ENCODE measurements at regions of chr22 and their contacts with region 1.

Region 1: GRCh38 chr22:35921777-35922176 is 106.8 kb downstream of the RBFOX2 start:
- DNase-seq: peak in 4 of 5 donors; percentile 69 to 78 (median 71)
- ATAC-seq: peak; percentile 76 to 92 (median 89)
- H3K4me3 ChIP-seq: no peak overlapping the region
- H3K27ac ChIP-seq: peak overlapping the region in 7 of 12 donors; percentile 9 to 70 (median 26)
- H3K4me1 ChIP-seq: peaks cover 0 to 67% (median 43%) of the 10 kb centered on the region in 12 donors
- H3K27me3 ChIP-seq: no peaks in the 10 kb centered on the region
- CTCF ChIP-seq: peak; percentile 50 to 87 (median 76)
- POLR2A ChIP-seq: no peak

Region 2: DNA sequence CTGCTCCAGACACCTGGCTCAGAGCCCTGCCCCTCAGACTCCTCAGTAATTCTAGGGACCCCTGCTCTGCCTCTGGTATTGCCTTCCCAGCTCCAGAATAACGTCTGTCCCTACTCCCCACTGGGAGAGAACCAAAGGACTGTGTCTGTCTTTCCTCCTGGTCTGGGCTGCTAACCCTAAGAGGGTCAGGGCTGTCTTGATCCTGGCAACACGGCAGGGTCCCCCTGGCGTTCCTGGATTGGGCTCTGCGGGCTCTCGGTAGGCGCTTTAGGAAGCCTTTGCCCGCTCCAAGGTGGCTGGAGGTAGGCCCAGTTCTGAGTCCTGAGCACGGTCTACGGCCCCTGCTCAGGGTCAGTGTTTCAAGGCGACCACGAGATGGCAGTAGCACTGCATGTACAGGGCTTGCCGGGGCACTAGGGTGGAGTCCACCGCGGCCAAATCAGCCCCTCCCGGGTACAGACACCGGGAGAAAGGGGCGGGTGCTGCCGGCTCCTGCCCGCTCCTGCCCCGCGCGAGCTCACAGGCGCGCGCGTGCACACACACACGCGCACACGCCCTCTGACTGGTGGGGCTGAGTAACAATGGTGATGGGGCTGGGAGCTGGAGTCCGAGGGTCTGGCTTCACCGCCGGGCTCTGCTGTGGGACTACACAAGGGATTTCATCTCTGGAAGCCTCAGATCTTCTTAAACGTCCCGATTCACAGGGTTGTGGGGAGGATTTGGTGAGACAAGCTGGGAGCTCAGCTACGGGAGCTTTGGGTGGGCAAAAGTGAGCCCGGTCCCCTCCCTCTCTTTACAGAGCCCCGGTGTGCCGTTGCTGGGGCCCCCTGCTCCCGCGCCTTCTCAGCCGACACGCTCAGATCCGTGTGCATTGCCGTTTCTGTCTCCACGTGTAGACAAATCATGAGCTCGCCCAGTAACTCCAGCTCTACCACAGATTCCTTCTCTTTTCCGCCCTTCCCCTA is 571.0 kb before region 1 on chr22:
- intact Hi-C with region 1: loop called in 3 of 10 experiments (anchors 5 to 10 kb)
- DNase-seq: peak; percentile 93 to 96 (median 94)
- ATAC-seq: peak; percentile 89 to 90 (median 90)
- H3K4me3 ChIP-seq: peak overlapping the region; percentile 27 to 69 (median 55)
- H3K27ac ChIP-seq: peak overlapping the region in 11 of 12 donors; percentile 51 to 93 (median 68)
- H3K4me1 ChIP-seq: peaks cover 0 to 47% (median 11%) of the 10 kb centered on the region in 12 donors
- H3K27me3 ChIP-seq: no peaks in the 10 kb centered on the region
- CTCF ChIP-seq: peak; percentile 81 to 99 (median 92)
- POLR2A ChIP-seq: peak in 1 of 2 donors; percentile 48

Region 3: GRCh38 chr22:35638410-35638809 is 283.4 kb before region 1 on chr22:
- intact Hi-C with region 1: loop called in 1 of 10 experiments (anchors 2 kb)
- DNase-seq: peak; percentile 89 to 94 (median 92)
- ATAC-seq: peak; percentile 96 to 98 (median 96)
- H3K4me3 ChIP-seq: peak overlapping the region in 3 of 12 donors; percentile 3 to 14 (median 11)
- H3K27ac ChIP-seq: peak overlapping the region; percentile 74 to 93 (median 84)
- H3K4me1 ChIP-seq: peaks cover 9 to 45% (median 30%) of the 10 kb centered on the region in 12 donors
- H3K27me3 ChIP-seq: no peaks in the 10 kb centered on the region
- CTCF ChIP-seq: no peak
- POLR2A ChIP-seq: peak in 1 of 2 donors; percentile 39

Region 4: GRCh38 chr22:35739076-35739930 is 182.5 kb before region 1 on chr22:
- intact Hi-C with region 1: loop called in 2 of 10 experiments (anchors 5 to 10 kb)
- DNase-seq: no peak
- ATAC-seq: peak in 2 of 4 donors; percentile 34
- H3K4me3 ChIP-seq: no peak overlapping the region
- H3K27ac ChIP-seq: peak overlapping the region in 1 of 12 donors; percentile 7
- H3K4me1 ChIP-seq: peaks cover 0 to 43% (median 26%) of the 10 kb centered on the region in 12 donors
- H3K27me3 ChIP-seq: no peaks in the 10 kb centered on the region
- CTCF ChIP-seq: peak in 8 of 12 donors; percentile 20 to 41 (median 31)
- POLR2A ChIP-seq: no peak

Region 5: GRCh38 chr22:35761037-35761436 is 160.7 kb before region 1 on chr22:
- intact Hi-C with region 1: loop called in 9 of 10 experiments (anchors 5 to 10 kb)
- DNase-seq: no peak
- ATAC-seq: peak in 2 of 4 donors; percentile 57
- H3K4me3 ChIP-seq: no peak overlapping the region
- H3K27ac ChIP-seq: no peak overlapping the region
- H3K4me1 ChIP-seq: peaks cover 0 to 16% (median 1%) of the 10 kb centered on the region in 12 donors
- H3K27me3 ChIP-seq: no peaks in the 10 kb centered on the region
- CTCF ChIP-seq: peak in 11 of 12 donors; percentile 12 to 51 (median 30)
- POLR2A ChIP-seq: no peak

Region 6: GRCh38 chr22:36075230-36075629 is 153.5 kb after region 1 on chr22:
- intact Hi-C with region 1: no loop called
- DNase-seq: no peak
- ATAC-seq: no peak
- H3K4me3 ChIP-seq: no peak overlapping the region
- H3K27ac ChIP-seq: no peak overlapping the region
- H3K4me1 ChIP-seq: peaks cover 0 to 5% (median 0%) of the 10 kb centered on the region in 12 donors
- H3K27me3 ChIP-seq: no peaks in the 10 kb centered on the region
- CTCF ChIP-seq: no peak
- POLR2A ChIP-seq: no peak

Measured in heart left ventricle (tissue), 16 donors.